ENCODE measurements at regions of chr19 and their contacts with region 1.

Region 1: GRCh38 chr19:7815325-7815724 is 14.7 kb upstream of the EVI5L start:
- DNase-seq: no peak
- H3K4me3 ChIP-seq: no peak overlapping the region
- H3K27ac ChIP-seq: no peak overlapping the region
- H3K4me1 ChIP-seq: no peaks in the 10 kb centered on the region
- H3K27me3 ChIP-seq: no peaks in the 10 kb centered on the region
- CTCF ChIP-seq: no peak

Region 2: DNA sequence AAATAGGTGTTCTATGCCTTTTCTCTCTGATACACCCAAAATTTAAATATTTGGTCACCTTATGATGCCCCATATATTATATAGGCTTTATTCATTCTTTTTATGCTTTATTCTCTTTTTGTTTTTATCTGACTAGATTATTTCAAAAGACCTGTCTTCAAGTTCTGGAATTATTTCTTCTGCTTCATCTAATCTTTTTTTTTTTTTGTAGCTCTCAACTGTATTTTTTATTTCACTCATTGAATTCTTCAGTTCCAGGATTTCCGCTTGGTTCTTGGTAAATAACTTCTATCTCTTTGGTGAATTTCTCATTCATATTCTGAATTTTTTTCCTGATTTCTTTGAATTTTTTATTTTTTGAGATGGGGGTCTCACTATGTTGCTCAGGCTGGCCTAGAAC is 56.2 kb before region 1 on chr19:
- CTCF ChIA-PET with region 1: no interaction called
- POLR2A ChIA-PET with region 1: no interaction called
- intact Hi-C with region 1: no loop called
- DNase-seq: no peak
- H3K4me3 ChIP-seq: no peak overlapping the region
- H3K27ac ChIP-seq: no peak overlapping the region
- H3K4me1 ChIP-seq: no peaks in the 10 kb centered on the region
- H3K27me3 ChIP-seq: no peaks in the 10 kb centered on the region
- CTCF ChIP-seq: no peak

Region 3: DNA sequence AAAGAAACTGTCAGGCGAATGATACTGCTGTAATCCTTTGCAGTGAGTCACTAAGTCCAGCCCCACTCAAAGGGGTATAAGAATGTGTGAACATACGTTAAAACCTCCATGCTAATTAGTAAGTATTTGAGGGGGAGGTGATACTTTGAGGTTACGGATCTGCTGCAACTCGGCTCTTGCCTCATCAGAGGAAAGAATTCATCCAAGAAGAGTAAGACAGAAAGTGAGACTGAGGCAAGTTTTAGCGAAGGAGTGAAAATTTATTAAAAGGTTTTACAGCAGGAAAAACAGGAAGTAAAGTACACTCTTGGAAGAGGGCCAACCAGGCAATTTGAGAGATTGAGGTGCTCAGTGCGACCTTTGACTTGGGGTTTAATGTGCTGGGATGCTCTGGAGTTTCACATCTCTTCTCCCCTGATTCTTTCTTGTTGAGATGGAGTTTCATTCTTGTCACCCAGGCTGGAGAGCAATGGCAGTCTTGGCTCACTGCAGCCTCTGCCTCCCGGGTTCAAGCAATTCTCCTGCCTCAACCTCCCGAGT is 42.5 kb before region 1 on chr19:
- CTCF ChIA-PET with region 1: interaction called, 10 read pairs
- POLR2A ChIA-PET with region 1: no interaction called
- intact Hi-C with region 1: no loop called
- DNase-seq: peak; percentile 46
- H3K4me3 ChIP-seq: no peak overlapping the region
- H3K27ac ChIP-seq: no peak overlapping the region
- H3K4me1 ChIP-seq: peaks cover 6% of the 10 kb centered on the region
- H3K27me3 ChIP-seq: no peaks in the 10 kb centered on the region
- CTCF ChIP-seq: no peak

Region 4: DNA sequence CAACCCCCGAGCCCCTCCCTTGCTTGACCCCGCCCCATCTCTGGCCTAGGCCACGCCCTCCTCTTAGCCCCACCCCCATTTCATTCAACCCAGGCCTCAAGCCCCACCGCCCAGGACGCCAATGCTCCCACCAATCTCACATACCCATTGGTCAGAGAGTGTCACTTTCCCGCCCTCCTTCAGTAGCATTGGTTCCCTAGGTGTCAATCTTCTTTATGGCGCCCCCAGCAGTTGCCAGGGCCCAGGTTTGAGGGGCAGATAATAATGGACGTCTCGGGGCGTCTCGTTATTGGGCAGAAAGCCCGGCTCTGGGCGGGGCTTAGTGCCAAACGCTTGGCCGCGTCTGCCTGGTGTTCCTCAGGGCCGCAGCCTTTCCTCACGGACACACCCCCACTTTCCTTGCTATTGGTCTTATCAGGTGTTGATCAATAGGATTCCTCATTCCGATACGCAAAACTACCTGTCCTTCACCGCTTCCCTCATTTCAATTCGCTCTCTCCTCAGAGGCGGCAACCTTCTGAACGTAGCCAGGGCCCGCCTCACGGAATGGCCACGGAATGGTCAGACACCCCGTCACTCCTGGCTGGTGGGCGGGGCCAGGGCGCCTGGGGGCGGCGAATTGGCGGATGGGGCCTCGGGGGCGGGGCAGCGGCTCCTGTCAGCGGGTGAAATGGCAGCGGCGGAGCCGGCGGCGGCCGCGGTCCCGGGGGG is 14.4 kb after region 1 on chr19 and contains the start of gene EVI5L:
- CTCF ChIA-PET with region 1: no interaction called
- POLR2A ChIA-PET with region 1: no interaction called
- intact Hi-C with region 1: no loop called
- DNase-seq: peak; percentile 99
- H3K4me3 ChIP-seq: peak within 1 kb of the TSS; percentile 59
- H3K27ac ChIP-seq: no peak within 1 kb of the TSS
- H3K4me1 ChIP-seq: peaks cover 9% of the 10 kb centered on the region
- H3K27me3 ChIP-seq: no peaks in the 10 kb centered on the region
- CTCF ChIP-seq: no peak
- total RNA-seq, gene EVI5L: 4.8 and 8.8 TPM in 2 replicates

Region 5: GRCh38 chr19:8036434-8037099 is 221.2 kb after region 1 on chr19:
- CTCF ChIA-PET with region 1: interaction called, 10 read pairs
- POLR2A ChIA-PET with region 1: no interaction called
- intact Hi-C with region 1: no loop called
- DNase-seq: no peak
- H3K4me3 ChIP-seq: no peak overlapping the region
- H3K27ac ChIP-seq: no peak overlapping the region
- H3K4me1 ChIP-seq: no peaks in the 10 kb centered on the region
- H3K27me3 ChIP-seq: no peaks in the 10 kb centered on the region
- CTCF ChIP-seq: no peak

Measured in A673 (cell line).